ENCODE measurements at regions of chr12 and their contacts with region 1.

Region 1: DNA sequence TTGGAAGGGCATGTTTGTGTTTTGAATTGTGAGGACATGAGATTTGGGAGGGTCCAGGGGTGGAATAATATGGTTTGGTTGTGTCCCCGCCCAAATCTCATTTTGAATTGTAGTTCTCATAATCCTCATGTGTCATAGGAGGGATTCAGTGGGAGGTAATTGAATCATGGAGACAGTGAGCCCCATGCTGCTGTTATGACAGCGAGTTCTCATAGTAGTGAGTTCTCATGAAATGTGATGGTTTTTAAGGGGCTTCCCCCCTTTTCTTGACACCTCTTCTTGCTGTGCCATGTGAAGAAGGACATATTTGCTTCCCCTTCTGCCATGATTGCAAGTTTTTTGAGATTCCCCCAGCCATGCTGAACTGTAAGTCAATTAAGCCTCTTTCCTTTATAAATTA is 260.0 kb downstream of the DUSP6 start:
- DNase-seq: peak; percentile 48
- H3K4me3 Mint-ChIP-seq: no peak overlapping the region
- H3K27ac Mint-ChIP-seq: peak overlapping the region; percentile 92
- H3K4me1 Mint-ChIP-seq: peaks cover 12% of the 10 kb centered on the region
- H3K27me3 Mint-ChIP-seq: peaks cover 3% of the 10 kb centered on the region

Region 2: DNA sequence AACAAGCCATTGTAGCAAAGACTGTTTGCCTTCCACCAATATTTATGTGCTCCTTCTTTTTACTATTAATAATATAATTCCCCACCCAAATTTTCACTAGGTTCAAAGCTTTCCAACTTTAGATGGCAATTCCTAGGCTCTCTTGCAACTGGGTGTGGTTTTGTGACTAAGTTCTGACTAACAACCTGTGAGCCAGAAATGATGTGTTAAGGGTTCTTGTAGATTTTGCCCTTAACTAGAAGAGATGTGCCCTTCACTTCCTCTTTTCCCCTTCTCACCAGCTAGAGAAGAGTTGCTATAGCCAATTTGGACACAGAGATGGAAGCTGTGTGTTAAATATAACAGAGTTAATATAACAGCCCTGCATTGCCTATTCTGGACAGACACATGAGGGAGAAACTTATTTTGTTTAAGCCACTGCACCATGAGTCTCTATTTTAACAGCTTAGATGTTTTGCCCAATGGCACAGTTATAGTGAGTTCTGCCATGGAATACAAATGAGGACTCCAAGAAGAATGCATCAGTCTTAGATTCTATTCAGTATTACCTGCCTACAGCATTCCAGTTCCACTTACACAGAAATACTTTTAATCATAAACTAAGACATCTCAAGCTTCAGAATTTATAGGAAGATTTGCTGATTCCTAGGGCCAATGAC is 43.8 kb after region 1 on chr12:
- CTCF ChIA-PET with region 1: no interaction called
- POLR2A ChIA-PET with region 1: no interaction called
- intact Hi-C with region 1: loop called (anchors 1 kb)
- DNase-seq: no peak
- H3K4me3 Mint-ChIP-seq: no peak overlapping the region
- H3K27ac Mint-ChIP-seq: no peak overlapping the region
- H3K4me1 Mint-ChIP-seq: peaks cover 31% of the 10 kb centered on the region
- H3K27me3 Mint-ChIP-seq: no peaks in the 10 kb centered on the region

Region 3: GRCh38 chr12:89244536-89244935 is 152.2 kb after region 1 on chr12:
- CTCF ChIA-PET with region 1: no interaction called
- POLR2A ChIA-PET with region 1: no interaction called
- intact Hi-C with region 1: no loop called
- DNase-seq: peak; percentile 40
- H3K4me3 Mint-ChIP-seq: peak overlapping the region; percentile 25
- H3K27ac Mint-ChIP-seq: peak overlapping the region; percentile 86
- H3K4me1 Mint-ChIP-seq: peaks cover 39% of the 10 kb centered on the region
- H3K27me3 Mint-ChIP-seq: no peaks in the 10 kb centered on the region